Cardiac septum (tissue), 1 donor: ENCODE measurements at regions of chr4 and their contacts with region 1.

Region 1: DNA sequence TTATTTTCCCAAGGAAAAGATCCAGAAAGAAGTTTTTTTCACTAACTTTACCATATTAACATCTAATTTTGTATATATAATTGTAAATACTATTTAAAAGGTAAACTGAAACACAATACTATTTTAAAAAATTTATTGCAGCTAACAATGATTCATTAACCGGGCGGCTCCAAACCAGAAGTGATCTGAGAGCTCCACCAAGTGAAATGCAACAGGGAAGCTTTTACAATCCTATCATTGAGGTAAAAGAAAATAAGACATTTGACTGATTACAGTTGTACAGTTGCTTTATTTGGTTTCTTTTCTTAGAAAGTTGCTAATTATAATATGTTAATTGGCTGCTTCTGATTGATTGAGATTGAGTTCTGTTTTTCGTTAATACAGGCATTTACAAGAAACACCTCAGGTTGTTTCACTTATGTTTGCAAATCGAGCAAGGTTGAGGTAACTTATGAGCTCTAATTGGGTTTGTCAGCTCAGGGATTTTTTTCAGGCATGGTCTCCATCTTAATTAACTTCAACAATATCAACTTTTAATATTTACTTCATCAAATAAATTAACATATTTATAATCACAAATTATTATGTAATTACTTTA is 220.2 kb upstream of the UGT8 start:
- DNase-seq: no peak

Region 2: DNA sequence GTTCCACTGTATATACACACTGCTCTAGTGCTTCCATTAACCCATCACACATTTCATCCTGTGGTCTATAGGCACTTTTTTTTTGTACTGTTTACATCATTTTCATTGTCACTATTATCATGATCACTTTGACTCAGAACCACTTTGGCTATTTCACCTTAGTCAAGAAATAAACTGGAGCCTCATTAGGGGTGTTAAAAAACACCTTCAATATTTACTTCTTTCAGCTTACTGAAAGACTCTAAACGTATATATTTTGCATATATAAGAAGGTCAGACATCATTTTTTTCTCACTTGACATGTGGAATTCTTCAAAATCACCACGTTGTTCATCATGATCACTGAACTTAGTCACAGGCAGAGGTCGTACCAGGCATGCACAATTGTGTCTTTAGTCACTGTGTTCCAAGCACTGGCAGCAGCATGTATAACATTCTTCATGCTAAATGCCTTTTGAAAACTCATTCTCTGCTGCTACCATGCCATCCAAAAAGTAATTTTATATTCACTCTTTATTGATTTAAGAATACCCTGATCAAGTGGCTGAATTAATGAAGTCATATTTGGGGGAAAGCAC is 169.7 kb before region 1 on chr4:
- intact Hi-C with region 1: loop called (anchors 2 kb)
- DNase-seq: no peak

Region 3: DNA sequence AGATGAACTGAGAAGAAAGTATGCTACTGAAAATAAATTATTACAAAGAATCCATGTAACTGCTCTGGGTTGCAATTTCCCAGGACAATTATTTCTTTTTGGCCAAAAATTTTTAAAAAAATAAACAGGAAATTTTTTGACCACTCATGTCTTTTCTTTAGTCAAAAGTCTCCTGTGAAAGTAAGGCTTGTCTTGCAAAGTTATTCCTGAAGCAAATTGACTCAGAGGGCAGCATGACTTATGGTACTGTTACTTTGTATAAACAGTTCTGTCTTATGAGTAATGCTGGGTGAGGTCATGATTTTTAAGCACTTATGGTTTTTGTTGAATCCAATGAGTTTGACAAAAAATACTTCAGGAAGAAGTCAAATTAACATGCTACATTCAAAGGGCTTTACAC is 106.2 kb before region 1 on chr4:
- intact Hi-C with region 1: no loop called
- DNase-seq: no peak